CD8-positive, alpha-beta memory T cell (primary cell): ENCODE measurements at regions of chr6 and their contacts with region 1.

Region 1: DNA sequence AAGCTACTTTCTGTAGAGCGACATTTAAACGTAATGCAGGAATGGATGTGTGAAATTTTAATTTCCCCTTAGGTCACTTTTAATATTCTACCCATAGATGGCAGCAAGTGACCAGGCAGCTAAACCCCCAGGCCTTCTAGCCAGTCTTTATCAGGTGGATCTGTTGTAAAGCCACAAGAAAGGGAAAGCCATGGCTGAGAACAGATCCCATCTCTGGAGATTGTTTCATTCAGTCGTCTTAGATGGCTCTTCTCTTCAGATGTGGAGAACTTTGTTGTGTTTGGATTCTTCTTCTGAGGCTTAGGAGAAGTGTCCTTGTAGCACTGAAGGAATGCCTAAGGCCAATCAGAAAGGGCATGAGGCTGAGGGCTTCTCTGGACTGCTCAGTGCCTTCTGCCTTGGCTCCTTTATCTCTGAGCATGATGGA is 15.8 kb upstream of the RNF182 start:
- DNase-seq: peak in 4 of 5 donors; percentile 22 to 60 (median 43)
- H3K4me3 ChIP-seq: no peak overlapping the region
- H3K4me3 Mint-ChIP-seq: no peak overlapping the region
- H3K27ac ChIP-seq: no peak overlapping the region
- H3K27ac Mint-ChIP-seq: no peak overlapping the region
- H3K4me1 ChIP-seq: no peaks in the 10 kb centered on the region
- H3K4me1 Mint-ChIP-seq: peaks cover 0 to 5% (median 0%) of the 10 kb centered on the region in 3 donors
- H3K27me3 ChIP-seq: peaks cover 3% of the 10 kb centered on the region
- H3K27me3 Mint-ChIP-seq: peaks cover 10 to 36% of the 10 kb centered on the region in 2 donors

Region 2: DNA sequence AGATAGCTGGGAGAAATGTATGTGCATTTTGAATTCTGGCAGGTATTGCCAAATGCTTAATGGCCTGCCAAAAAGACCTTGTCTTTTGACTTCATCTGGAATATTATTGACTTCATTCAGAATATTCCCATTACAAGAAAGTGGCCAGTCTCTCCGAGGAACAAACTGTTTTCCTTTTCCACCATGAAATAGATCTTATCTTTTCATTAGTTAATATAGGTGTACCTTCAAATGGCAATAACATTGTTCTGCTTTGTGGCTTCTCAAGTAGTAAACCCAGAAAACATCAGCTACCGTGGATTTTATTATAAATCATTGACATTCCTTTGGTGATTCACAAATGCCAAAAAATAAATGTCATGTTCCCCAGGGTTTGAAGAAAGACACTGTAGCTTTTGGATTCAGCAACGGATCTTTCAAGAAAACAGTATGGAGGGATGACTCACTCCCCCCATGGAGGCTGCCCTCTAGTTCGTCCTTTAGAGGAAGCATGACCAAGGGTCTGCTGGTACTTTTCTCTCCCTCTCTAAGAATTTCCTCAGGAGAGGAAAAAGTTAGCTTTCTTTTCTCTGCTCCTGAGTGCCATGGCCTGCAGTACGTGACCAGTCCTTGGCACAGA is 14.7 kb after region 1 on chr6:
- CTCF ChIA-PET with region 1: interaction called, 10 read pairs
- POLR2A ChIA-PET with region 1: no interaction called
- DNase-seq: no peak
- H3K4me3 ChIP-seq: no peak overlapping the region
- H3K4me3 Mint-ChIP-seq: peak overlapping the region; percentile 69 to 88 (median 77)
- H3K27ac ChIP-seq: peak overlapping the region; percentile 49
- H3K27ac Mint-ChIP-seq: no peak overlapping the region
- H3K4me1 ChIP-seq: peaks cover 8% of the 10 kb centered on the region
- H3K4me1 Mint-ChIP-seq: peaks cover 14 to 16% (median 16%) of the 10 kb centered on the region in 3 donors
- H3K27me3 ChIP-seq: peaks cover 40% of the 10 kb centered on the region
- H3K27me3 Mint-ChIP-seq: peaks cover 43 to 71% of the 10 kb centered on the region in 2 donors

Region 3: DNA sequence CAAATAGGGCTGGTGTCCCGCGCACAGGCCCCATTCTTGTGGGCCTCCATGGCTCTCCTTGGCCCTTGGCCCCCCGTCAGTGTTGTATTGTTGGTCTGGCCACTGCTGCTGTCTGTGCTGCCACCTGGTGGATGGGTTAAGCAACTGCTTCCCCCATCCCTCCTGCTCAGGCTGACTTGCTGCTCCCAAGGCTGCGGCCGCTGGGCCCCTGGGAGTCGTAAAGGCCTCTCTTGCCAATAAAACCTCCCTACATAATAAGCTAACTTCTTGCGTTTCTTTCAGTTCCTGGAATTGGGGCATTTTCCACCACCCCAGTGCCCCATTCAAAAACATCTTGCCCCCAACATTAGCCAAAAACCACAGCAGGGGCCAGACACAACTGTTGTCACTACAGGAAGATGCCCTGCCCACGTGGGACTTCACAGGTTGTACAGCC is 235.7 kb after region 1 on chr6:
- CTCF ChIA-PET with region 1: interaction called, 36 read pairs
- POLR2A ChIA-PET with region 1: no interaction called
- DNase-seq: peak; percentile 54 to 78 (median 62)
- H3K4me3 ChIP-seq: no peak overlapping the region
- H3K4me3 Mint-ChIP-seq: no peak overlapping the region
- H3K27ac ChIP-seq: no peak overlapping the region
- H3K27ac Mint-ChIP-seq: no peak overlapping the region
- H3K4me1 ChIP-seq: no peaks in the 10 kb centered on the region
- H3K4me1 Mint-ChIP-seq: peaks cover 0 to 5% (median 4%) of the 10 kb centered on the region in 3 donors
- H3K27me3 ChIP-seq: no peaks in the 10 kb centered on the region
- H3K27me3 Mint-ChIP-seq: no peaks in the 10 kb centered on the region